ENCODE measurements at regions of chr10 and their contacts with region 1.

Region 1: GRCh38 chr10:69179743-69180524 is at the start of gene SUPV3L1:
- DNase-seq: peak; percentile 81
- H3K4me3 Mint-ChIP-seq: peak within 1 kb of the TSS; percentile 95
- H3K27ac Mint-ChIP-seq: peak within 1 kb of the TSS; percentile 99
- H3K4me1 Mint-ChIP-seq: peaks cover 41% of the 10 kb centered on the region
- H3K27me3 Mint-ChIP-seq: no peaks in the 10 kb centered on the region
- total RNA-seq, gene SUPV3L1: 67.5 and 69.1 TPM in 2 replicates

Region 2: DNA sequence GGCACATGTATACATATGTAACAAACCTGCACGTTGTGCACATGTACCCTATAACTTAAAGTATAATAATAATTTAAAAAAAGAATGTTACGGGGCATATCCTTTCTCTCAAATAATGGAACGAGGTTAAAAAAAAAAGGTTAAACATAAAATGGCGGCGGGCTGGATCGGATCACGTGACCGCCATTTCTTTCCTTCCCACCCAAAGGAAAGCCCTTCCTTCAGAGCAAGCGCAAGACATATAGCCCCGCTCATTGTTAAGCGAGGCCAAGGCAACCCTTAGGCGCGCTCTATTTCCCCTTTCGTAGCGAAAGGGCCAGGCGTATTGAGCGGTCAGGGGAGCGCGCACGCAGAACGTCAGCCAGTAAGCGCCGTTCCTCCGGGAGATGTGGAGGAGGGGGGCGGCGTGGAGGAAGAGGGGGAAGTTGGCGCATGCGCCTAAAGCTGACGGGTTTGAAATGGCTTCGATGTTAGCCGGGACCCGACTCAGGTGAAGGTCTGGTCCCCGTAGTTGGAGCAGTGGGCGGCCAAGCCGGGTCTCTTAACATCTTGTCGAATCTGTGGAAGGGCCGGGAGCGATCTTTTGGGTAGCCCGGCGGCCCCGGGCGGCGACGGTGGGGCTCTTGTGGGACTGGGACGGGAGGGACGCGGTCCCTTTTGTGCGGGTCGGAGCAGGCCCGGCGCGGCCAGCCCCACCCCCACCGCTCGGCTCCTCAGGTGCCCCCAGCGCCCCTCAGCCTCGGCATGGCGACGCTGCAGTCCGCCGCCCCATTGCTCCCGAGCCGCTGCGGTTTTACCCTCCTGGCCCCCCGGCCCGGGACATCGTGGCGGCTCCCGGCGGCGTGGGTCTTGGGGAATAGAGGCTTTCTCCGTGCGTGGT is 458.9 kb before region 1 on chr10 and contains the start of gene CCAR1:
- intact Hi-C with region 1: loop called (anchors 10 kb)
- DNase-seq: peak; percentile 95
- H3K4me3 Mint-ChIP-seq: peak within 1 kb of the TSS; percentile 90
- H3K27ac Mint-ChIP-seq: peak within 1 kb of the TSS; percentile 98
- H3K4me1 Mint-ChIP-seq: peaks cover 14% of the 10 kb centered on the region
- H3K27me3 Mint-ChIP-seq: peaks cover 2% of the 10 kb centered on the region
- total RNA-seq, gene CCAR1: 102 and 106 TPM in 2 replicates

Region 3: GRCh38 chr10:68924593-68924992 is 255.3 kb before region 1 on chr10:
- intact Hi-C with region 1: no loop called
- DNase-seq: no peak
- H3K4me3 Mint-ChIP-seq: no peak overlapping the region
- H3K27ac Mint-ChIP-seq: peak overlapping the region; percentile 34
- H3K4me1 Mint-ChIP-seq: peaks cover 13% of the 10 kb centered on the region
- H3K27me3 Mint-ChIP-seq: no peaks in the 10 kb centered on the region

Region 4: GRCh38 chr10:68997211-68997610 is 182.7 kb before region 1 on chr10:
- intact Hi-C with region 1: loop called (anchors 2 kb)
- DNase-seq: no peak
- H3K4me3 Mint-ChIP-seq: peak overlapping the region; percentile 16
- H3K27ac Mint-ChIP-seq: peak overlapping the region; percentile 86
- H3K4me1 Mint-ChIP-seq: peaks cover 35% of the 10 kb centered on the region
- H3K27me3 Mint-ChIP-seq: no peaks in the 10 kb centered on the region

Region 5: GRCh38 chr10:69092959-69093850 is 86.7 kb before region 1 on chr10:
- intact Hi-C with region 1: loop called (anchors 1 kb)
- DNase-seq: peak; percentile 80
- H3K4me3 Mint-ChIP-seq: peak overlapping the region; percentile 45
- H3K27ac Mint-ChIP-seq: peak overlapping the region; percentile 72
- H3K4me1 Mint-ChIP-seq: peaks cover 51% of the 10 kb centered on the region
- H3K27me3 Mint-ChIP-seq: no peaks in the 10 kb centered on the region

Region 6: DNA sequence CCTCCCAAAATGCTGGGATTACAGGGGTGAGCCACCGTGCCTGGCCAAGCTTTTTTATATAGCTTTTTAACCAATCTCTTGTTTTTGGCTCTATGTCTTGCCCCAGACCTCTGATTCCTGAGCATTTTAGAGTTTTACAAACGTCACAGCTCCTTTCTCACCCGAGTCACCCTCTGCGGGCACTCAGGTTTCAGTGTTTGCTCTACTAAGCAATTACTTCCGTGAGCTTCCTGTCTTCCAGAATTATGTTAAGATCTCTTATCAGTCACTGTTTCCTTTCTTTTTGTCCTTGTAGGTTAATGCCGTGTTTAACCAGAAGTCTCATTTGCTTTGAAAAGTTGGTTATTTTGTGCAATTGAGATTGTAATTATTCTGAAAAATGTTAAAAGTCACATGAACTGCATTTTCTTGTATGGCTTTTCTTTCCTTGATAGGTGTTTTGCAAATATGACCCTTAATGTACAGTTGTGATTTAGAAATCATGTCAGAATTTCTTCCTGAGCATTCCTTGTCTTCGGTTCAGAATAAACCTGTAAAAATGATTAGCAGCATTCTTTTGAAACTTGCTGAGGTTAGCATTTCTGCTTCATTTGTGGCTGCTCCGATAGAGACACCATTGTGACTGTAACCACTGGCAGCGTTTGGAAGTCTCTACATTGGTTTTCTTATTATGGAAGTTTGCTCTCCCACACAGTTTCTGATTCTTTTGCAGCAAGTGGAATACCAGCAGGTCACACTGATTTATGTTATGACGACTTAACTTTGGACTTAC is 35.7 kb after region 1 on chr10:
- intact Hi-C with region 1: loop called (anchors 2 kb)
- DNase-seq: no peak
- H3K4me3 Mint-ChIP-seq: peak overlapping the region; percentile 27
- H3K27ac Mint-ChIP-seq: peak overlapping the region; percentile 87
- H3K4me1 Mint-ChIP-seq: peaks cover 36% of the 10 kb centered on the region
- H3K27me3 Mint-ChIP-seq: no peaks in the 10 kb centered on the region

Region 7: DNA sequence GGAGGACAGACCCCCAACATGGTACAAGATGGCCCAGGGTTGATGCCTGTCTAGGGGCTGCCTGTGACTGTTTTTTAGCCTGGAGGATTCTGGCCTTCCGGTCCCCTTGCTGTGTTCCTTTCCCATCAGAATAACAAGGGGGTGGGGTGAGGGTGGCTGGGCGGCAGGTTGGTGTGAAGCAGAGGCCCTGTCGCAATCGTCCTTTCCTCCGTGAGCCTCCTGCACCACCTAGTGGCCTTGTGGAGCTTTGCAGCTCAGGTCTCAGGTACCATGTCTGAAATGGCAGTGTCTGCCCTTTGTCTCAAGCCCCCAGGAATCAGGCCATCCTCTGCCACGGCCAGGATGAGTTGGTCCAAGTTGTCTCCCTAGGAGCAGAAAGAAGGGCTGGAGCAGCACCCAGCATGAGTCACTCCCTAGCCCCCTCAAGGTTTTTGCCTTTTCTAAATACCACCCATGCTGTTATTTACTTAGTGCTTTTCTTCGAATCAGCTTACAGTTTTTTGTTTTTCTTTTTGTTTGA is 212.6 kb after region 1 on chr10:
- intact Hi-C with region 1: loop called (anchors 2 kb)
- DNase-seq: peak; percentile 74
- H3K4me3 Mint-ChIP-seq: no peak overlapping the region
- H3K27ac Mint-ChIP-seq: peak overlapping the region; percentile 63
- H3K4me1 Mint-ChIP-seq: peaks cover 39% of the 10 kb centered on the region
- H3K27me3 Mint-ChIP-seq: no peaks in the 10 kb centered on the region

Measured in activated T-helper 1 cell treated with anti-CD3 and anti-CD28 coated beads, Interleukin-12 subunit alpha, Interleukin-12 subunit beta, Interleukin-2, Interleukin-4 antibody, amounts not matched to agents 30 ng/mL and 10 ng/mL and 1 ng/mL, durations not matched to agents 14 hours and 24 hours and 36 hours (primary cell).